Activated CD4-positive, alpha-beta T cell treated with anti-CD3 and anti-CD28 coated beads for 36 hours (primary cell): ENCODE measurements at regions of chr11 and their contacts with region 1.

Region 1: DNA sequence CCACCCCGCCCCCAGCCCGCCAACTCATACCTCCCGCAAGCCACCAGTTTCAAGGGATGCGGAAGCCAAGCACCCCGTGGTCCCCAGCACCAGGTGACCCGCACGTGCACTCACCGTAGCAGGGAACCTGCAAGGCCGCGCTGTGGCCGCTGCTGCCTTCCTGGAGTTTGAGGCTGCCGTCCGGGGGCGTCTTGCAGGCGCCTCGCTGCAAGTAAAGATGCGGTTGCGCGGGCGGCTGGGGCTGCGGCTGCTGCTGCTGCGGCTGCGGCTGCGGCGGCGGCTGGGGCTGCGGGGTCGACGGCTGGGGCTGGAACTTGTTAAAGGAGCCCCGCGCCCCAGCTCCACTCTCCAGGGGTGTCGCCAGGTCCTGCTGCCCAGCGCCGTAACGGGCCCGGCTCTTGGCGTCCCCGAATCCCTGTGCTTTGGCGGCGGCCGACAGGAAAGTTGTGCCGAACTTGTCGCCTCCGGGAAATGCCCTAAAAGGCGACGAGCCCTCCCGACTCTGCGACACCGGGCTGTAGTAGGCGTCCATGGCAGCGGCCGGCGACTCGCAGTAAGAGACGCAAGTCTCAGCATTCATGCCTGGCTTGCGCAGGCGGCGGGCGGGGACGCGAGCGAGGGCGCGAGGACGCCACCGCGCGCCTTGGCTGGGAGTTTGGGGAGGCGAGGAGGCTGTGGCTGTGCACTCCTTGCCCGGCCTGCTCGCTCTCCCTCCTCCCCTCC is at the start of gene ALX4:
- DNase-seq: peak; percentile 69
- ATAC-seq: peak; percentile 32
- H3K4me3 Mint-ChIP-seq: no peak within 1 kb of the TSS
- H3K27ac Mint-ChIP-seq: no peak within 1 kb of the TSS
- H3K4me1 Mint-ChIP-seq: peaks cover 23% of the 10 kb centered on the region
- H3K27me3 Mint-ChIP-seq: peaks cover 78% of the 10 kb centered on the region
- total RNA-seq, gene ALX4: not detected

Region 2: GRCh38 chr11:43579171-43579918 is 730.3 kb before region 1 on chr11:
- CTCF ChIA-PET with region 1: no interaction called
- POLR2A ChIA-PET with region 1: no interaction called
- intact Hi-C with region 1: loop called in 1 of 2 experiments (anchors 5 kb)
- DNase-seq: peak; percentile 76
- ATAC-seq: peak; percentile 65
- H3K4me3 Mint-ChIP-seq: peak overlapping the region; percentile 47
- H3K27ac Mint-ChIP-seq: no peak overlapping the region
- H3K4me1 Mint-ChIP-seq: peaks cover 43% of the 10 kb centered on the region
- H3K27me3 Mint-ChIP-seq: peaks cover 84% of the 10 kb centered on the region

Region 3: DNA sequence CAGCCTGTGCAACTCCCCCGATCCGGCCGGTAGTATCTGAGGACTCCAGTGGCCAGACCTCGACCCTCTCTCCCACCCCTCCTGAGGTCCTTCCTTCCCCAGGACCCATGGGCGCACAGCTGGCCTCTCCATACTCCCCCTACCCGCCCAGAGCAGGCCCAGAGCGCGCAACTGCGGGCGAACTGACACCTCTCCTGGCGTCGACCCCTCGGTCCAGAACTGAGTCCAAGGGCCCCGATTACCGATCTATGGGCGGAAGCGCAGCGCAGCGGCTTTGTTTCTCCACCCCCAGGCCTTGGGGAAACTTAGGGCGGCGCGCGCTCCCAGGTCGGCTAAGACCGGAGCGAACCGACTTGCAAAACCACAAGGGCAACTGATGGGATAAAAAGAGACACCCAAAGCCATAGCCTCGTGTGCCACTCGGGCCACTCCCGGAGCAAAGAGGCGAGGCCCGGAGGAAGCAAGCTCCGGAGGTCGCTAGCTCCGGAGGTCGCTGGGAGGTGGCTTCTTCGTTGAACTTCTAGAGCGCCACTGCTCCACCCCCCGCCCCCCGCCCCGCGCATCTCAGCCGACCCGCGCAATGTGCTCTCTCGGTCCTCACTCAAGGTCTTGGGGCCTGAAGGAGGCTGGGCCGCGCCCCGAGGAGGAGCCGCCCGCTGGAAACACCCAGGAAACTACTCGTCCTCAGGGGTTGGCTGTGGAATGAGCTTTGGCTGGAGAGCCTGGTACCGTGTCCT is 10.1 kb after region 1 on chr11:
- CTCF ChIA-PET with region 1: interaction called, 3 read pairs
- POLR2A ChIA-PET with region 1: no interaction called
- intact Hi-C with region 1: loop called (anchors 2 kb)
- DNase-seq: no peak
- ATAC-seq: peak; percentile 12
- H3K4me3 Mint-ChIP-seq: no peak overlapping the region
- H3K27ac Mint-ChIP-seq: no peak overlapping the region
- H3K4me1 Mint-ChIP-seq: peaks cover 13% of the 10 kb centered on the region
- H3K27me3 Mint-ChIP-seq: peaks cover 80% of the 10 kb centered on the region

Region 4: DNA sequence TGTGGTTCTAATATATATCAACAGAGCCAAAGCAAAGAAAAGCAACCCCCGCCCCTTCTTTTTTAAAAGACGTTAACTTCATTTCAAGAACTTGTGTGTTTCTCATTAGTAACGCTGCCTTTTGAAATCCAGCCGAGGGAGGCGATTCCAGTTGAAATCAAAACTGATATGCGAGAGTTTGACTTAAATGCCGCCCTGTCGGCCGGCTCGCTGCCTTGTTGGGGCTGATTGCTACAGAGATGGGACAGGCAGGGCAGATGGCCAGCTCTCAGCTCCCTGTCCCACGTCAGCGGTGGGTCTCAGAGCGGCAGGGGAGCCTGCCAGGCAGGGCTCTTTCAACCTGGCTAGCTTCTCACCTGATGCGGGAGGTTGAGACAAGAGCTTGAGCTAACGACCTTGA is 52.2 kb after region 1 on chr11:
- CTCF ChIA-PET with region 1: no interaction called
- POLR2A ChIA-PET with region 1: no interaction called
- intact Hi-C with region 1: no loop called
- DNase-seq: no peak
- ATAC-seq: no peak
- H3K4me3 Mint-ChIP-seq: no peak overlapping the region
- H3K27ac Mint-ChIP-seq: no peak overlapping the region
- H3K4me1 Mint-ChIP-seq: no peaks in the 10 kb centered on the region
- H3K27me3 Mint-ChIP-seq: peaks cover 17% of the 10 kb centered on the region